Prostate gland (tissue), 2 donors: ENCODE measurements at regions of chr17 and their contacts with region 1.

Region 1: GRCh38 chr17:16215273-16215964 is at the start of gene NCOR1:
- DNase-seq: peak; percentile 89
- H3K4me3 ChIP-seq: peak within 1 kb of the TSS; percentile 91 to 94
- H3K27ac ChIP-seq: peak within 1 kb of the TSS; percentile 92 to 94
- H3K4me1 ChIP-seq: peaks cover 6% of the 10 kb centered on the region
- H3K27me3 ChIP-seq: no peaks in the 10 kb centered on the region
- CTCF ChIP-seq: peak; percentile 20 to 44 (median 40)
- POLR2A ChIP-seq: peak; percentile 85
- total RNA-seq, gene NCOR1: 123 to 209 TPM

Region 2: DNA sequence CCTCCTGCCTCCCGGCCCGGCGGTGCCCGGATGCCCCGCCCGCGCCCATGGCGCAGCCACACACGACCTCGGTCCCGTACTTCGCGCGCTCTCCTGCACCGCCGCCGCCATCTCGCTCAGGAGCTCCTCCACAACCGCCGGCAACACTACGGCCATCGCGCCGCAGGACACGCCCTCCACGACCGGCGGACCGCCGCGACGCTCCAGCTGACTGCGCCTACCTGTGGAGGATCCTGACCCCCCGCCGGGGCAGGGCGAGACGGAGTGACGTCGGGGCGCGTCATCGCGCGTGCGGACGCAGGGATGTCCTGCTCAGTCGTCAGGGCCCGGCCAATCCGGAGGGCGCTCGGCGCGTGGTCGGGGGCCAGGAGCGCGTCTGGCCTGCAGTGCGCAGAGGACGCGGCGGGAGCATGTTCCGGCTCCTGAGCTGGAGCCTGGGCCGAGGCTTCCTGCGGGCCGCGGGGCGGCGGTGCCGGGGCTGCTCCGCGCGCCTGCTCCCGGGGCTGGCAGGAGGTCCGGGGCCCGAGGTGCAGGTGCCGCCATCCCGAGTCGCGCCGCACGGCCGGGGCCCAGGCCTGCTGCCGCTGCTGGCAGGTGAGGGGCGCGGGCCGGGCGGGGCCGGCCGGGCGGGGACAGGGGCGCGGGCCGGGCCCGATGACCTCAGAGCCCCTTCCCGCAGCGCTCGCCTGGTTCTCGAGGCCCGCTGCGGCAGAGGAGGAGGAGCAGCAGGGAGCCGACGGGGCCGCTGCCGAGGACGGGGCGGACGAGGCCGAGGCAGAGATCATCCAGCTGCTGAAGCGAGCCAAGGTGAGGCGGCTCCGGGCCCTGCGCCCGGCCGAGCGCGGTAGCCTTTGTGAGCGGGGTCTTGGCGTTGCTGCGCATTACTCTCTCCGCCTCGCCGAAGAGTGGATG is 215.7 kb before region 1 on chr17 and contains the starts of genes TTC19 and ZSWIM7:
- intact Hi-C with region 1: loop called (anchors 5 kb)
- DNase-seq: peak; percentile 97
- H3K4me3 ChIP-seq: peak within 1 kb of the TSS; percentile 63 to 84
- H3K27ac ChIP-seq: peak within 1 kb of the TSS; percentile 92 to 97
- H3K4me1 ChIP-seq: peaks cover 7% of the 10 kb centered on the region
- H3K27me3 ChIP-seq: no peaks in the 10 kb centered on the region
- CTCF ChIP-seq: peak in 1 of 4 experiments; percentile 31
- POLR2A ChIP-seq: peak; percentile 99
- total RNA-seq, gene TTC19: 87.9 to 100 TPM
- total RNA-seq, gene ZSWIM7: 15.1 to 16.5 TPM

Region 3: GRCh38 chr17:16285957-16286640 is 70.7 kb after region 1 on chr17:
- intact Hi-C with region 1: loop called (anchors 5 kb)
- DNase-seq: peak; percentile 28
- H3K4me3 ChIP-seq: no peak overlapping the region
- H3K27ac ChIP-seq: peak overlapping the region; percentile 71 to 74
- H3K4me1 ChIP-seq: no peaks in the 10 kb centered on the region
- H3K27me3 ChIP-seq: no peaks in the 10 kb centered on the region
- CTCF ChIP-seq: peak in 2 of 4 experiments; percentile 10 to 17
- POLR2A ChIP-seq: no peak

Region 4: DNA sequence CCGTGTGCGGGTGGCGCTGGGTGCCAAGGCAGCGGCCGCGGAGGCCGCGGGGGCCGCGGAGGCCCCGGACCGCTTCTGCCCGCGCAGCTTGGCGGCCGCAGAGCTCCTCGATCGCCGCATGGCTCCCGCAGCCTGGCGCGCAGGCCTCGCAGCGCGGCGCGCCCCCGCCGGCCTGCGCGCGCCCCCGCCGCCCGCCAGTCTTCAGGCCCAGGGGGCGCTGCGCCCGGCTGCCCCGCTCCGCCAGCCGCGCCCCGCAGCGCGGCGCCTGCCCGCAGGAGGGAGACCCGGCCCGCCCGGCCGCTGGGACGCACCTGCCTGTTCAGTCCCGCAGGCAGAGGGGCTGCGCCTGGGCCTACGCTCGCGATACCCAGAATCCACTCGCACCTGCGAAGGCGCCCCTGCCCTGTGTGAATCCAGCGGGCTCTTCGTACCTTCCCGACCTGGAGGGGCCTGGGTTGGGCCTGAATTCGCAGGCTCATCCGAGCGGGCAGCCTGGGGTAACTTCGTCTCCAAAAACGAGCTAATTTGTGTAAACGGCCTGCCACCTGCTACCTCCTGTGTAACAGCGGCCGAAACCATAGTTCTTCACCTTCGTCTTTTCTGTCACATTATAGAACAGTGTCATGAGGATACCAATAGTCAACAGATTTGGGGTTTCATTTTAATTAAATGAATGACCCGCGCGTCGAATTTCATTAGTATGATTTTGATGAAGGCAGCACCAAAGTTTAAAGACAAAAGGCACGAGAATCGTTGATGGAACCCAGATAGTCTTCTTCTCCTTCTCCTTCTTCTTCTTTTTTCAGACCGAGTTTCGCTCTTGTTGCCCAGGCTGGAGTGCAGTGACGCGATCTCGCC is 138.1 kb after region 1 on chr17 and contains the start of gene CENPV:
- intact Hi-C with region 1: no loop called
- DNase-seq: peak; percentile 20
- H3K4me3 ChIP-seq: peak within 1 kb of the TSS; percentile 62 to 63
- H3K27ac ChIP-seq: peak within 1 kb of the TSS; percentile 43 to 45
- H3K4me1 ChIP-seq: no peaks in the 10 kb centered on the region
- H3K27me3 ChIP-seq: no peaks in the 10 kb centered on the region
- CTCF ChIP-seq: peak in 2 of 4 experiments; percentile 5 to 36
- POLR2A ChIP-seq: no peak
- total RNA-seq, gene CENPV: 29.8 to 71.5 TPM